Common myeloid progenitor, CD34-positive (primary cell): ENCODE measurements at regions of chr17 and their contacts with region 1.

Region 1: DNA sequence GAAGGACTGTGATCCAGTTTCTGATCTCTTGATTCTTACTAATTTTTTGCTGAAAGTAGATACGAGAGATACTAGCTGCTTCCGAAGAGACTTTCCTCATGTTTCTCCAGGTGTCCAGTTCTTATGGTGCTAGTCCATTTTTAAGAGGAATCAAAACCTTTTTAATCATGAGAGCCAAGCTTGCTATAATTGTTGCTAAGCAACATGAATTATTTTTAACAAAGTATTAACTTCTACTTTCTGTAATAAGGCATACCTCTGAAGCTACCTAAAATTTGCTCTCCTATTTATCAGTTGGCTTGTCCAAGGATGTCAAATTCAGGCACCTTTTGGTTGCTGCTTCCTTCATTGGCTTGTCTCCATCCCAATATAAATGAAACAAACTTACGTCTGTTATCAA is 19.7 kb downstream of the PTRH2 start:
- DNase-seq: no peak
- H3K4me3 ChIP-seq: no peak overlapping the region
- H3K27ac ChIP-seq: no peak overlapping the region
- H3K4me1 ChIP-seq: no peaks in the 10 kb centered on the region
- H3K27me3 ChIP-seq: no peaks in the 10 kb centered on the region

Region 2: DNA sequence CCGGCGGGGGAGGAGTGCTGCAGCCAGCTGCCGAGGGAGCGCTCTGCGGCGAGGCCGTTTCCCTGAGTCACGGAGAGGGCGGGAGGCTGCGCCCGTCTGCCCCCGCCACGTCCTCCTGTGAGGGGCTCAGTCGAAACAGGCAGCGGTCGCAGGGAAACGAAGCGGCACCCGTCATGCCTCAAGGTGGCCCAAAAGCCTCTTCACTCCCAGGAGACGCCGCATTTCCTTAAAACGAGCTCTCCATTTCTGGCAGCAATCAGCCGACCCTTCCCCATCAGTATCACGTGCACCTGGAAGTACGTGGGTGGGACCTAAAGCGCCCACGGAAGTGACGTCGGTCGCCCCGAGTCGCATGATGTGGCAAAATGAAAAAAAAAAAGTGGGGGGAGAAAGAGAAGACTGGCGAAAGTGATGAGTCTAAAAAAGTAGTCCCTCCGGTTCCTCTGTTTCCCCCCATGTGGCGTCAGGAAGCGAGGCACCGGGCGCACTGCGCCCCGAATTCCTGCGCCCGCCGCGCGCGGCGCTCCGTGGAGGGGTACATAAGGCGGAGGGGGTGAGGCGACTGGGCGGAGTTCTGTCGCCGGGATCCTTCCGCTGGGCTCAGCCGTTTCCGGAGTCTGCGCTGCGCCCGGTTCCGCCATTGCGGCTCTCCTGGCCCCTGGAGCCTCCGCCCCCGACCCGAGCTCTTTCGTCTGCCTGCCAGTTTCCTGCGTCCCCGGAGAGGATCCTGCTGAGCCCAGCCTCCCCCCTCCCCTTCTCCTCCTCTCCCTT is 68.0 kb before region 1 on chr17 and contains the start of gene CLTC:
- CTCF ChIA-PET with region 1: no interaction called
- POLR2A ChIA-PET with region 1: no interaction called
- DNase-seq: peak; percentile 99 to 100 (median 99)
- H3K4me3 ChIP-seq: peak within 1 kb of the TSS; percentile 85 to 98 (median 95)
- H3K27ac ChIP-seq: peak within 1 kb of the TSS; percentile 99 to 100
- H3K4me1 ChIP-seq: peaks cover 12 to 52% (median 30%) of the 10 kb centered on the region in 4 experiments
- H3K27me3 ChIP-seq: no peaks in the 10 kb centered on the region

Region 3: GRCh38 chr17:59641799-59642489 is 45.6 kb before region 1 on chr17:
- CTCF ChIA-PET with region 1: no interaction called
- POLR2A ChIA-PET with region 1: no interaction called
- DNase-seq: peak; percentile 45 to 88 (median 82)
- H3K4me3 ChIP-seq: peak overlapping the region in 4 of 7 experiments; percentile 1 to 38 (median 12)
- H3K27ac ChIP-seq: no peak overlapping the region
- H3K4me1 ChIP-seq: peaks cover 18 to 38% (median 20%) of the 10 kb centered on the region in 4 experiments
- H3K27me3 ChIP-seq: no peaks in the 10 kb centered on the region

Region 4: GRCh38 chr17:59675231-59675630 is 12.3 kb before region 1 on chr17:
- CTCF ChIA-PET with region 1: interaction called, 13 read pairs
- POLR2A ChIA-PET with region 1: no interaction called
- DNase-seq: no peak
- H3K4me3 ChIP-seq: no peak overlapping the region
- H3K27ac ChIP-seq: peak overlapping the region in 1 of 2 experiments; percentile 1
- H3K4me1 ChIP-seq: peaks cover 0 to 6% (median 3%) of the 10 kb centered on the region in 4 experiments
- H3K27me3 ChIP-seq: no peaks in the 10 kb centered on the region

Region 5: DNA sequence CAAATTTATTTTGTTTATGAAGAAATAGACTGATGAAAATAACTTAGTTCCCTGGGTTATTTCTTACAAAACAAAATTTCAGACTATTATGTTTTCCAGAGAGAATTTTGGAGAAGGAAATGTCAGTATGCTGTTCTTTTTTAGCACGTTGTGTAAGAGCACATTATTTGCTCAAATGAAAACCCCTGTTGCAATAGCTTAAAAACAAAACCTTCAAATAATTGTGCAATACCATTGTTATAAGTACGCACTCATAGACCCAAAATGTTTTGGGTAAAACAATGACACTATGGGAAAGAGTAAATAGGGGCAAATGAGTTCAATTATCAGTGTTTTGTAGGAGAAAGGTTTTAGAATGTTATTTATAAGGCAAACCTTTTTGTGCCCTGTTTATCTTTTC is 38.2 kb after region 1 on chr17:
- CTCF ChIA-PET with region 1: no interaction called
- POLR2A ChIA-PET with region 1: no interaction called
- DNase-seq: peak in 2 of 3 donors; percentile 38 to 45
- H3K4me3 ChIP-seq: no peak overlapping the region
- H3K27ac ChIP-seq: peak overlapping the region in 1 of 2 experiments; percentile 35
- H3K4me1 ChIP-seq: peaks cover 7 to 29% (median 12%) of the 10 kb centered on the region in 4 experiments
- H3K27me3 ChIP-seq: no peaks in the 10 kb centered on the region